Activated CD4-positive, alpha-beta T cell treated with anti-CD3 and anti-CD28 coated beads, Interleukin-2, amount 10 ng/mL, durations not matched to agents 24 days and 14 days (primary cell): ENCODE measurements at regions of chr18 and their contacts with region 1.

Region 1: DNA sequence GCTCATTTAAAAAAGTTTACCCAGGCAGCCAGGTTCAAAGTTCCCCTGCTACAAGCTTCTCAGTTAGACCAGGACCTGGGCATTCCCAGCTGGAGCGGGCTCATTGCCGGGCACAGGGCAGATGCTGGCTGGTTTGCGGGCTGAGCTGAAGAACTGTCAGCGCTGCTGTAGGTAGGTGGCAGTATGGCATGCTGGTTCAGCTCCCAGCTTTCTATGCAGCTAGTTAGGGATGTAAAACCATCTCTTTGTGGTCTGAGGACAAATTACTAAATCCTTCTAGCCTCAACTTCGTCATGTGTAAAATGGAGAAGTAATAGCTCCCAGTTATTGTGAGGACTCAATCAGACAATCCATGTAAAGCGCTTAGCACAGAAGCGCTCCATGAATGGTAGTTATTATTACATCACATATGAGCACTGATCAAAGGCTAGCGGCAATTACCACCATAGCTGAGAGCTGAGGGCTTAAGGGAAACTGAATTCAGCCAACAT is 2.4 kb upstream of the LDLRAD4 start:
- DNase-seq: peak; percentile 85
- H3K4me3 Mint-ChIP-seq: peak overlapping the region; percentile 79
- H3K27ac Mint-ChIP-seq: peak overlapping the region; percentile 84
- H3K4me1 Mint-ChIP-seq: peaks cover 30% of the 10 kb centered on the region
- H3K27me3 Mint-ChIP-seq: peaks cover 38% of the 10 kb centered on the region

Region 2: GRCh38 chr18:13289481-13290205 is 73.5 kb after region 1 on chr18:
- intact Hi-C with region 1: loop called (anchors 2 kb)
- DNase-seq: no peak
- H3K4me3 Mint-ChIP-seq: no peak overlapping the region
- H3K27ac Mint-ChIP-seq: peak overlapping the region; percentile 83
- H3K4me1 Mint-ChIP-seq: peaks cover 39% of the 10 kb centered on the region
- H3K27me3 Mint-ChIP-seq: no peaks in the 10 kb centered on the region

Region 3: DNA sequence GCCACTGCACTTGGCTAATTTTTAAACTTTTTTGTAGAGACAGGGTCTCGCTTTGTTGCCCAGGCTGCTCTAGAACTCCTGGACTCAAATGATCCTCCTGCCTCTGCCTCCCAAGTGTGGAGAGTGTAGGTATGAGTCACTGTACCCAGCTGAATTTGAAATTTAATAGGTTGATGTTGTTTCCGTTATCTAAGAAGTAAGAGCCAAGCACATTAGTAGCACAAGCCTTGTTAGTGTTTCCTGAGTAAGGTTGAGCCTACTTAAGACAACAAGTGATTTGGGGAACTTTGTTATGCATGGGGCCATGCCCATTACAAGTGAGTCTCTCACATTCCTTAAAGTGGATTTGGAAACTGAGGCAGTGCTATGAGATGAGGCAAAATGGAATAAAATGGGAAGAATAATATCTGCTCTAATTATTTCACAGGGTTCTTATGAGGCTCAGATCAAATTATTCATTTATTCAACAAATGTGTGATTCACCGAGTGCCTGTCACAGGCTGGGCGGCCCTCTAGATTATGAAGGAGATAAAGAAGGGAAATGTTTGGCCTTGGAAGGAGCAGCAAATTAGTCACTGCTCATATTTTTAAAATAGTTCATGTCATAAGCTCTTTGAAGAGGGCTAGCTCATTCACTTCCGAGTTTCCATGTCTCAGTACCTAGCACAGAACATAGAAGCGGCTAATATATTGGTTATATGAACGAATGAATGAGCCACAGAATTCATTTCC is 219.6 kb after region 1 on chr18:
- intact Hi-C with region 1: loop called (anchors 1 kb)
- DNase-seq: no peak
- H3K4me3 Mint-ChIP-seq: no peak overlapping the region
- H3K27ac Mint-ChIP-seq: peak overlapping the region; percentile 4
- H3K4me1 Mint-ChIP-seq: peaks cover 58% of the 10 kb centered on the region
- H3K27me3 Mint-ChIP-seq: no peaks in the 10 kb centered on the region

Region 4: DNA sequence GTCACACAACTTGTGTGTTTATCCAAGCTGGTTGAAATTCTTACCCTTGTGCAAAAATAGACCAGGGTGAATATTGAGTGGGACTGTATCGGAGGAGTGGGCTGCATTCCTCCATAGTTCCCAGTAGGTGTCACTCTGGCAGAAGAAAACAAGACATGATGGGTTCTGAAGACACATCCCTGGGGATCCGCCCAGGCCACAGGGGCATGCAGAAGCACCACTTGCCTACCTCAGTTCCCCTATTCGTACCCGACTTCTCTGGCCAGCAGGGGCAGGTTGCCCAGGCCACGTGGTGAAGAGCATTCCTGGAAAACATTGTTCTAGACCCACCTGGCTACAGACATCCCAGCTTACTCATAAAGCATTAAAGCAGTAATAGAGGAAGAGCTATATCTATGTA is 342.0 kb after region 1 on chr18:
- intact Hi-C with region 1: loop called (anchors 1 kb)
- DNase-seq: peak; percentile 77
- H3K4me3 Mint-ChIP-seq: no peak overlapping the region
- H3K27ac Mint-ChIP-seq: peak overlapping the region; percentile 48
- H3K4me1 Mint-ChIP-seq: peaks cover 29% of the 10 kb centered on the region
- H3K27me3 Mint-ChIP-seq: no peaks in the 10 kb centered on the region

Region 5: GRCh38 chr18:13726232-13726971 is 510.3 kb after region 1 on chr18 and contains the starts of genes FAM210A and RNMT:
- intact Hi-C with region 1: loop called (anchors 2 kb)
- DNase-seq: peak; percentile 99
- H3K4me3 Mint-ChIP-seq: peak within 1 kb of the TSS; percentile 85
- H3K27ac Mint-ChIP-seq: peak within 1 kb of the TSS; percentile 83
- H3K4me1 Mint-ChIP-seq: peaks cover 57% of the 10 kb centered on the region
- H3K27me3 Mint-ChIP-seq: no peaks in the 10 kb centered on the region
- total RNA-seq, gene FAM210A: 37.2 and 42.3 TPM in 2 replicates
- total RNA-seq, gene RNMT: 57.8 and 65.9 TPM in 2 replicates